Activated CD8-positive, alpha-beta T cell treated with anti-CD3 and anti-CD28 coated beads for 36 hours (primary cell): ENCODE measurements at regions of chr3 and their contacts with region 1.

Region 1: GRCh38 chr3:189324538-189325138 is 152.9 kb downstream of the TPRG1 start:
- DNase-seq: peak; percentile 96
- ATAC-seq: peak; percentile 96
- H3K4me3 Mint-ChIP-seq: peak overlapping the region; percentile 60
- H3K27ac Mint-ChIP-seq: peak overlapping the region; percentile 95
- H3K4me1 Mint-ChIP-seq: peaks cover 56% of the 10 kb centered on the region
- H3K27me3 Mint-ChIP-seq: no peaks in the 10 kb centered on the region
- CTCF ChIP-seq: no peak

Region 2: GRCh38 chr3:189288348-189289235 is 36.0 kb before region 1 on chr3:
- CTCF ChIA-PET with region 1: interaction called, 5 read pairs
- POLR2A ChIA-PET with region 1: no interaction called
- intact Hi-C with region 1: loop called (anchors 5 kb)
- DNase-seq: no peak
- ATAC-seq: peak; percentile 79
- H3K4me3 Mint-ChIP-seq: no peak overlapping the region
- H3K27ac Mint-ChIP-seq: peak overlapping the region; percentile 0
- H3K4me1 Mint-ChIP-seq: peaks cover 33% of the 10 kb centered on the region
- H3K27me3 Mint-ChIP-seq: no peaks in the 10 kb centered on the region
- CTCF ChIP-seq: no peak

Region 3: GRCh38 chr3:189355481-189356201 is 31.0 kb after region 1 on chr3:
- CTCF ChIA-PET with region 1: interaction called, 3 read pairs
- POLR2A ChIA-PET with region 1: interaction called, 11 read pairs
- intact Hi-C with region 1: no loop called
- DNase-seq: peak; percentile 62
- ATAC-seq: peak; percentile 94
- H3K4me3 Mint-ChIP-seq: peak overlapping the region; percentile 49
- H3K27ac Mint-ChIP-seq: peak overlapping the region; percentile 76
- H3K4me1 Mint-ChIP-seq: peaks cover 20% of the 10 kb centered on the region
- H3K27me3 Mint-ChIP-seq: no peaks in the 10 kb centered on the region
- CTCF ChIP-seq: no peak